Mucosa of descending colon (tissue), 3 donors: ENCODE measurements at regions of chr3 and their contacts with region 1.

Region 1: GRCh38 chr3:57597122-57597923 is at the start of gene ARF4:
- DNase-seq: peak; percentile 99 to 100 (median 100)
- ATAC-seq: peak; percentile 92
- H3K4me3 ChIP-seq: peak within 1 kb of the TSS; percentile 86
- H3K4me1 ChIP-seq: peaks cover 39% of the 10 kb centered on the region
- CTCF ChIP-seq: peak; percentile 20
- total RNA-seq, gene ARF4: 114 to 164 (median 115) TPM

Region 2: DNA sequence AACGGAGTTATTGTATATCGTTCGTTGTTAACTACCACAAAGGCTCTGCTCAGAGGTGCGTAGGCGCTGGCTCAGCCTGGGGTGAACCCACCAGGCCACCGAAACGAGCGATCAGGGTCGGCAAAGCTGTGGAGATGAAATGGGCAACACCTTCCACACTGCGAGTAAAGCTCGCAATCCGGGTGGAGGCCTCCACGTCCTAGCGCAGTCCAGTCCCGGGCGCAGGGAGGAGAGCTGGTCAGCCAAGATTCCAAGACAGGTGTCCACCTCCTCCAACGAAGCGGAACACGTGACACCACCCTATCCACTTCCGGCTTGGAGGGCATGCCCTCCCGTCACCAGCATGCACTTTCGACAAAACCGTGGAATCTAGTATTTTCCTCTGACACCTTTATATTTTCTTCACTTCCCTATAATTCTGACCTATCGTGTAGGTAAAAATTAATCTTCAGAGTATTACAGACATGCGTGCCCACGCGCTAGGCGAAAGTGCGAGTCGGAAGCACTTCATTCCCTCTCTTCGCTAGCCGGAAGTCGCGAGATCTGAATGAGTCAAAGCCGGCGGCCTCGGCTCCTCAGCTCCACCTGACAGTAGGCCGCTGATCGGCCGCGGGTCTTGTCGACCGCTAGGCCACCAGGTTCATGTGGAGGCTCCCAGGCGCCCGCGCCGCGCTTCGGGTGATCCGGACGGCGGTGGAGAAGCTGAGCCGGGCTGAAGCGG is 41.4 kb before region 1 on chr3 and contains the start of gene PDE12:
- intact Hi-C with region 1: loop called in 1 of 2 experiments (anchors 2 kb)
- DNase-seq: peak; percentile 88 to 90 (median 90)
- ATAC-seq: peak; percentile 92
- H3K4me3 ChIP-seq: peak within 1 kb of the TSS; percentile 81
- H3K4me1 ChIP-seq: peaks cover 21% of the 10 kb centered on the region
- CTCF ChIP-seq: no peak
- total RNA-seq, gene PDE12: 18.2 to 19.9 (median 19.5) TPM